CD4-positive, alpha-beta T cell (primary cell): ENCODE measurements at regions of chr6 and their contacts with region 1.

Region 1: DNA sequence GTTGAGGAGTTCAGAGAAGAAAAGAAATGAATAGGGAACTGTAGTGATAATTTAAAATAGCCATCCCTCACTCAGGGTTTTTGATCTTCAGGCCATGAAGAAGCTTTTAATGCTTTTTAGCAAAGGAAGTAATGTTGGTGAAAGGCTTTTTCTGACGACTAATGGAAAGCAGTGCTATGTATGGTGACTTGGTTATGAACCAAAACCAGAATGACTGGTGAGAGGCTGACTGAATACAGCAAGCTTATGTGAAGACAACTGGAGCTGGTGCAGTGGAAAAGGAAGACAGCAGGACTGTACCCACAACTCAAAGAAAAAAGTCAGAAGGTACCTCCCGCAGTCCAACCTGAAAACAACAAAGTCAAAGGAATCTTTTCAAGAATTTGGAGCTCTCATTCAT is 118.8 kb downstream of the PRDM1 start:
- DNase-seq: no peak
- ATAC-seq: no peak
- H3K4me3 ChIP-seq: no peak overlapping the region
- H3K4me3 Mint-ChIP-seq: no peak overlapping the region
- H3K27ac ChIP-seq: no peak overlapping the region
- H3K27ac Mint-ChIP-seq: no peak overlapping the region
- H3K4me1 ChIP-seq: no peaks in the 10 kb centered on the region
- H3K4me1 Mint-ChIP-seq: peaks cover 7% of the 10 kb centered on the region
- H3K27me3 ChIP-seq: no peaks in the 10 kb centered on the region
- H3K27me3 Mint-ChIP-seq: no peaks in the 10 kb centered on the region
- CTCF ChIP-seq: no peak

Region 2: GRCh38 chr6:106181664-106182418 is 23.1 kb before region 1 on chr6:
- CTCF ChIA-PET with region 1: no interaction called
- POLR2A ChIA-PET with region 1: no interaction called
- intact Hi-C with region 1: loop called in 1 of 2 experiments (anchors 1 kb)
- DNase-seq: no peak
- ATAC-seq: no peak
- H3K4me3 ChIP-seq: no peak overlapping the region
- H3K4me3 Mint-ChIP-seq: no peak overlapping the region
- H3K27ac ChIP-seq: no peak overlapping the region
- H3K27ac Mint-ChIP-seq: peak overlapping the region; percentile 2
- H3K4me1 ChIP-seq: peaks cover 32% of the 10 kb centered on the region
- H3K4me1 Mint-ChIP-seq: peaks cover 42% of the 10 kb centered on the region
- H3K27me3 ChIP-seq: no peaks in the 10 kb centered on the region
- H3K27me3 Mint-ChIP-seq: no peaks in the 10 kb centered on the region
- CTCF ChIP-seq: no peak

Region 3: DNA sequence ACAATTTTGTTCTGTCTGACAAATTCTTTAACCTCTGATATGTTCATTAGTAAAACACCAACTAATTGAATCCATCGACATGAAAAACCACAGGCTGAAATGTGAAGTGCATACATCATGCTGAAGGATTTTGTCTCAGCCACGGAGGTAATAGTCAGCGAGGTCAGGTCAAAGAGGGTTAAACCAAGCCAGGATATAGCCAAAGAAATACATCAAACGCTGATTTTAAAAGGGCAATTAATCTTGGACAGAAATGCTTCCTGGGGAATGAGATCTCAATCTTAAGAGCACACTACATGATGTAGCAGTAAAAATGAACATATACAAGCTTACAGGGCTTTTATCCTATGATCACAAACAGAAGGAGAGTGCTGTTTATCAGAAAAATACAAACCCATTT is 12.1 kb before region 1 on chr6:
- CTCF ChIA-PET with region 1: no interaction called
- POLR2A ChIA-PET with region 1: no interaction called
- intact Hi-C with region 1: no loop called
- DNase-seq: no peak
- ATAC-seq: no peak
- H3K4me3 ChIP-seq: no peak overlapping the region
- H3K4me3 Mint-ChIP-seq: no peak overlapping the region
- H3K27ac ChIP-seq: no peak overlapping the region
- H3K27ac Mint-ChIP-seq: no peak overlapping the region
- H3K4me1 ChIP-seq: peaks cover 19% of the 10 kb centered on the region
- H3K4me1 Mint-ChIP-seq: peaks cover 44% of the 10 kb centered on the region
- H3K27me3 ChIP-seq: no peaks in the 10 kb centered on the region
- H3K27me3 Mint-ChIP-seq: no peaks in the 10 kb centered on the region
- CTCF ChIP-seq: no peak

Region 4: DNA sequence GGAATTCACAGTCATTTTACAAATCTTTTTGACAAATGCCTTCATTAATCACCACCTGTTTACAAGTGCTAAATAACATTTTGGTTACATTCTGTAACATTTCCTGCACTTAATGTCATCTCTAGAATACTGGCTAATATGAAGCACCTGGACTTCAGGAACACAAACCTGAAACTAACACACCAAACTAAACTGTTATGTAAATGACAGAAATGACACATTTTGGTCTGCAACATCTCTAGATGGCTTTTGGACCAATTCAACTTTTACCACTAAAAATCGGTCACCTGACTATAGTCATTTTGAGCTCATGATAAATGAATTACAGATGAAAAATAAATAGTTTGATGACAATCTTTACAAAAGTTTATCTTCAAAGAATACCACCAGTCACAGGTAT is 40.0 kb after region 1 on chr6:
- CTCF ChIA-PET with region 1: no interaction called
- POLR2A ChIA-PET with region 1: no interaction called
- intact Hi-C with region 1: no loop called
- DNase-seq: no peak
- ATAC-seq: no peak
- H3K4me3 ChIP-seq: no peak overlapping the region
- H3K4me3 Mint-ChIP-seq: no peak overlapping the region
- H3K27ac ChIP-seq: no peak overlapping the region
- H3K27ac Mint-ChIP-seq: no peak overlapping the region
- H3K4me1 ChIP-seq: no peaks in the 10 kb centered on the region
- H3K4me1 Mint-ChIP-seq: no peaks in the 10 kb centered on the region
- H3K27me3 ChIP-seq: no peaks in the 10 kb centered on the region
- H3K27me3 Mint-ChIP-seq: no peaks in the 10 kb centered on the region
- CTCF ChIP-seq: no peak

Region 5: DNA sequence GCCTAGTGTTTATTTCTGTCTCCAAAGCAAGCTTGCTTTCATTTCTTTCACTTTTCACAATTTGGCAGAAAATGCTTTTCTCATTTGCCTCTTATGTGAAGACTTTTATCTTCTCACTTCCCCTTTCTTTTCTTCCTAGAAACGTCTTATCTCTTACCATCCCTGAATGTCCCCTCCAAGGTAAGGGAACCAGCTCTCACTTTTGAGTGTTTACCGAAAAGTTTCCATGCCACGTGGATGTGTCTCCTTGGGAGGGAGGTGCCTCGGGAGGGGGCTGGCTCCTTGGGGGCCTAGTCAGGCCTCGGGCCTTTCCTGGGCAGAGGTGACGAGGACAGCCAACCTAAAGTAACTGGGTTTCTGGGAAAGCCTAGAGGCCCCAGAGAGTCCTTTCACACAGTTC is 642.2 kb after region 1 on chr6:
- CTCF ChIA-PET with region 1: no interaction called
- POLR2A ChIA-PET with region 1: no interaction called
- intact Hi-C with region 1: no loop called
- DNase-seq: no peak
- ATAC-seq: no peak
- H3K4me3 ChIP-seq: no peak overlapping the region
- H3K4me3 Mint-ChIP-seq: no peak overlapping the region
- H3K27ac ChIP-seq: no peak overlapping the region
- H3K27ac Mint-ChIP-seq: no peak overlapping the region
- H3K4me1 ChIP-seq: no peaks in the 10 kb centered on the region
- H3K4me1 Mint-ChIP-seq: no peaks in the 10 kb centered on the region
- H3K27me3 ChIP-seq: no peaks in the 10 kb centered on the region
- H3K27me3 Mint-ChIP-seq: peaks cover 19% of the 10 kb centered on the region
- CTCF ChIP-seq: no peak